Body of pancreas (tissue), 4 donors: ENCODE measurements at regions of chr15 and their contacts with region 1.

Region 1: DNA sequence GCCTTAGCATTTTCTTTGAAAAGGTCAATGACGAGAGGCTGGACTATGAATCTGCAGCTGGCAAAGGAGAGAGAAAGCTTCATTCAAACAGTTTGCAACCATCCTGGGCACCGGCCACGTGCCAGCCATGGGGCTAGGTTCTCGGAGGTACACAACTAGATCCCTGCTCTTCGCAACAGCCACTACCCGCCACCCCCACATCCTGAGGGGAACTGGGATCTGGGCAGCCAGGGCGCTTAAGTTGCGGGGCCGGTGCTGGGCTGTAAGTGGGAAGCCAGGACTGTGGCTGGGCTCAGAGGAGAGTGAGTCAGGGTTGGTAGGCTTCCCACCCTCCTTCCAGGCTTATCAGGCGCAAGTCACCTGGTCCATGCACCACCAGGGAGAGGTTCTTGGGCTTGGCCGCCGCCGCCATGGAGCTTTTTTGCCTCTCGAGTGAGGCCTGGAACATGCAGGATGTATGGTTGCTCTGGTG is 95.0 kb upstream of the TERB2 start:
- DNase-seq: no peak
- ATAC-seq: no peak
- H3K4me3 ChIP-seq: no peak overlapping the region
- H3K27ac ChIP-seq: no peak overlapping the region
- H3K4me1 ChIP-seq: no peaks in the 10 kb centered on the region
- H3K27me3 ChIP-seq: no peaks in the 10 kb centered on the region
- CTCF ChIP-seq: no peak
- POLR2A ChIP-seq: no peak

Region 2: DNA sequence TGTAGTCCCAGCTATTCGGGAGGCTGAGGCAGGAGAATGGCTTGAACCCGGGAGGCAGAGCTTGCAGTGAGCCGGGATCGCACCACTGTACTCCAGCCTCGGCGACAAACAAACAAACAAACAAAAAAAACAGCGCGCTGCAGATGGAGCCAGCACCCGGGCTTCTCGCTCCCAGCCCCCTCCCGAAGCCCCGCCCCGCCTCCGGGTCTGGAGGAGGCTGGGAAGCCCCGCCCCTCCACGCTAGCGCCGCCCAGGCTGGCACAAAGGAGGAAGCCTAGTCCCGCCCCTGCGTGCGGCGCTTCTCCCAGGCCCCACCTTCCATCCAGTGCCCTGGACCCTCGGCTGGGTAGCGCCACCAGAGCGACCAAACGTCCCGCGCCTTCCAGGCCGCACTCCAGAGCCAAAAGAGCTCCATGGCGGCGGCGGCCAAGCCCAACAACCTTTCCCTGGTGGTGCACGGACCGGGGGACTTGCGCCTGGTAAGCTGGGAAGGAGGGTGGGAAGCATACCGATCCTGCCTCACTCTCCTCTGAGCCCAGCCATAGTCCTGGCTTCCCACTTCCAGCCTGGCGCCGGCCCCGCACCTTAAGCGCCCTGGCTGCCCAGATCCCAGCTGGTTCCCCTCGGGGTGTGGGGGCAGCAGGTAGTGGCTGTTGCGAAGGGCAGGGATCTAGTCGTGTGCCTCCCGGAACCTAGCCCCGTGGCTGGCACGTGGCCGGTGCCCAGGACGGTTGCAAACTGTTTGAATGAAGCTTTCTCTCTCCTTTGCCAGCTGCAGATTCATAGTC is 161.6 kb after region 1 on chr15 and contains the start of gene SORD:
- intact Hi-C with region 1: loop called (anchors 10 kb)
- DNase-seq: peak; percentile 94 to 98 (median 94)
- ATAC-seq: peak; percentile 96
- H3K4me3 ChIP-seq: peak within 1 kb of the TSS; percentile 41 to 50
- H3K27ac ChIP-seq: peak within 1 kb of the TSS; percentile 47 to 70 (median 59)
- H3K4me1 ChIP-seq: peaks cover 33% of the 10 kb centered on the region
- H3K27me3 ChIP-seq: no peaks in the 10 kb centered on the region
- CTCF ChIP-seq: no peak
- POLR2A ChIP-seq: peak; percentile 43 to 76 (median 72)
- total RNA-seq, gene SORD: 9.3 to 18.1 TPM